ENCODE measurements at regions of chr17 and their contacts with region 1.

Region 1: GRCh38 chr17:77842528-77843147 is 115.9 kb upstream of the TNRC6C start:
- DNase-seq: peak; percentile 79
- H3K4me3 Mint-ChIP-seq: no peak overlapping the region
- H3K27ac Mint-ChIP-seq: peak overlapping the region; percentile 81
- H3K4me1 Mint-ChIP-seq: peaks cover 54% of the 10 kb centered on the region
- H3K27me3 Mint-ChIP-seq: peaks cover 8% of the 10 kb centered on the region

Region 2: GRCh38 chr17:77444984-77445759 is 397.5 kb before region 1 on chr17:
- CTCF ChIA-PET with region 1: no interaction called
- intact Hi-C with region 1: loop called (anchors 10 kb)
- DNase-seq: peak; percentile 87
- H3K4me3 Mint-ChIP-seq: peak overlapping the region; percentile 58
- H3K27ac Mint-ChIP-seq: peak overlapping the region; percentile 94
- H3K4me1 Mint-ChIP-seq: peaks cover 89% of the 10 kb centered on the region
- H3K27me3 Mint-ChIP-seq: no peaks in the 10 kb centered on the region

Region 3: GRCh38 chr17:77783991-77784820 is 58.4 kb before region 1 on chr17:
- CTCF ChIA-PET with region 1: no interaction called
- intact Hi-C with region 1: loop called (anchors 1 kb)
- DNase-seq: peak; percentile 88
- H3K4me3 Mint-ChIP-seq: no peak overlapping the region
- H3K27ac Mint-ChIP-seq: peak overlapping the region; percentile 75
- H3K4me1 Mint-ChIP-seq: peaks cover 17% of the 10 kb centered on the region
- H3K27me3 Mint-ChIP-seq: no peaks in the 10 kb centered on the region

Region 4: GRCh38 chr17:77957857-77958715 is 115.4 kb after region 1 on chr17 and contains the start of gene TNRC6C:
- CTCF ChIA-PET with region 1: interaction called, 4 read pairs
- intact Hi-C with region 1: loop called (anchors 1 kb)
- DNase-seq: peak; percentile 100
- H3K4me3 Mint-ChIP-seq: peak within 1 kb of the TSS; percentile 89
- H3K27ac Mint-ChIP-seq: peak within 1 kb of the TSS; percentile 84
- H3K4me1 Mint-ChIP-seq: peaks cover 32% of the 10 kb centered on the region
- H3K27me3 Mint-ChIP-seq: peaks cover 4% of the 10 kb centered on the region
- total RNA-seq, gene TNRC6C: 11.4 to 12.8 TPM

Region 5: GRCh38 chr17:78133971-78134898 is 291.6 kb after region 1 on chr17:
- CTCF ChIA-PET with region 1: no interaction called
- intact Hi-C with region 1: loop called (anchors 5 kb)
- DNase-seq: peak; percentile 90
- H3K4me3 Mint-ChIP-seq: peak overlapping the region; percentile 60
- H3K27ac Mint-ChIP-seq: peak overlapping the region; percentile 7
- H3K4me1 Mint-ChIP-seq: peaks cover 62% of the 10 kb centered on the region
- H3K27me3 Mint-ChIP-seq: no peaks in the 10 kb centered on the region

Measured in activated naive CD4-positive, alpha-beta T cell treated with anti-CD3 and anti-CD28 coated beads for 36 hours (primary cell).